ENCODE measurements at regions of chr3 and their contacts with region 1.

Region 1: GRCh38 chr3:11236595-11237461 is 35.4 kb upstream of the ATG7 start:
- DNase-seq: peak; percentile 72
- CTCF ChIP-seq: peak; percentile 75

Region 2: GRCh38 chr3:11335056-11335608 is 98.3 kb after region 1 on chr3:
- in situ Hi-C with region 1: loop called (anchors 25 kb)
- DNase-seq: peak; percentile 66
- CTCF ChIP-seq: peak; percentile 61

Region 3: GRCh38 chr3:11651900-11652299 is 415.1 kb after region 1 on chr3:
- in situ Hi-C with region 1: loop called (anchors 25 kb)
- DNase-seq: peak; percentile 44
- CTCF ChIP-seq: peak; percentile 31

Region 4: GRCh38 chr3:11774294-11774877 is 537.6 kb after region 1 on chr3:
- in situ Hi-C with region 1: no loop called
- DNase-seq: no peak
- CTCF ChIP-seq: no peak